Panc1 (cell line): ENCODE measurements at regions of chr5 and their contacts with region 1.

Region 1: GRCh38 chr5:52007230-52007858 is 624.1 kb downstream of the ISL1 start:
- DNase-seq: peak; percentile 39
- ATAC-seq: peak; percentile 88; the same call in 1 of the 2 replicates
- H3K4me3 ChIP-seq: no peak overlapping the region
- H3K27ac ChIP-seq: no peak overlapping the region
- H3K4me1 ChIP-seq: no peaks in the 10 kb centered on the region
- H3K27me3 ChIP-seq: no peaks in the 10 kb centered on the region
- CTCF ChIP-seq: peak; percentile 70

Region 2: GRCh38 chr5:51382763-51383490 is 624.4 kb before region 1 on chr5 and contains the start of gene ISL1:
- CTCF ChIA-PET with region 1: no interaction called
- POLR2A ChIA-PET with region 1: no interaction called
- in situ Hi-C with region 1: no loop called
- intact Hi-C with region 1: loop called (anchors 2 kb)
- DNase-seq: no peak
- ATAC-seq: peak; percentile 90
- H3K4me3 ChIP-seq: peak within 1 kb of the TSS; percentile 38 to 57
- H3K27ac ChIP-seq: no peak within 1 kb of the TSS
- H3K4me1 ChIP-seq: peaks cover 25% of the 10 kb centered on the region
- H3K27me3 ChIP-seq: peaks cover 75% of the 10 kb centered on the region
- CTCF ChIP-seq: no peak
- total RNA-seq, gene ISL1: 0.36 TPM

Region 3: GRCh38 chr5:51651889-51652288 is 355.5 kb before region 1 on chr5:
- CTCF ChIA-PET with region 1: no interaction called
- POLR2A ChIA-PET with region 1: no interaction called
- in situ Hi-C with region 1: no loop called
- intact Hi-C with region 1: no loop called
- DNase-seq: no peak
- ATAC-seq: no peak
- H3K4me3 ChIP-seq: no peak overlapping the region
- H3K27ac ChIP-seq: no peak overlapping the region
- H3K4me1 ChIP-seq: no peaks in the 10 kb centered on the region
- H3K27me3 ChIP-seq: no peaks in the 10 kb centered on the region
- CTCF ChIP-seq: no peak

Region 4: DNA sequence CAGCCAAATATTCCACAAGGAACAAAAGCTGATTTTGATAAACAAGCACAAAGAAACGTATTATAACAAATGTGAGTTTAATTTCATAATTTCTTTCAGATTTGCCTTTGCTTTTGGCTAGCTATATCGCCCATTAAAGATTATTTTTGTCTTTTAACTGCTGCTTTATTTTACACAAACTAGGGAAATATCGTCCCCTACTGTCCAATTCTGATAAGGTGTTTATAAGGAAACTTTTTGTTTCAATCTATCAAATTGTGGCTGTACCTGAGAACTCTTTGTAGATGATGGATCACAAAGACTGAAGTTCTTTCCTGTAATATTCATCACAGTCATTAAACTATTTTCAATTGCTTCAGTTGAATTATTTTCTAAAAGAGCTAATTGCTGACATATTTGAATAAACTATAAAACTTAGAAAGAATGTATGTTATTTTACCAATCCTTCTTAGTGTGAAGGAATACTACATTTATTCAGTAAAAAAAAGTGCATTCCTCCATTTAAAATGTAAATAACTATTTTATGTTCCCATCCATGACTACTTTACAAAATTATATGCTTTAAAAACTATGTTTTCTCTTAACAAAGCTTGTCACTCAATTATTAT is 349.1 kb after region 1 on chr5:
- CTCF ChIA-PET with region 1: no interaction called
- POLR2A ChIA-PET with region 1: no interaction called
- in situ Hi-C with region 1: no loop called
- intact Hi-C with region 1: loop called (anchors 10 kb)
- DNase-seq: peak; percentile 2
- ATAC-seq: no peak
- H3K4me3 ChIP-seq: no peak overlapping the region
- H3K27ac ChIP-seq: no peak overlapping the region
- H3K4me1 ChIP-seq: no peaks in the 10 kb centered on the region
- H3K27me3 ChIP-seq: no peaks in the 10 kb centered on the region
- CTCF ChIP-seq: peak; percentile 77; the same call in 1 of the 2 replicates